ENCODE measurements at regions of chr2 and their contacts with region 1.

Region 1: GRCh38 chr2:197113275-197113711 is 186.8 kb upstream of the PGAP1 start:
- DNase-seq: peak; percentile 37
- H3K4me3 ChIP-seq: no peak overlapping the region
- H3K27ac ChIP-seq: peak overlapping the region in 1 of 2 experiments; percentile 84; a peak in 2 of 4 replicates
- H3K4me1 ChIP-seq: peaks cover 5 to 16% of the 10 kb centered on the region in 2 experiments; a peak in 2 of 4 replicates
- H3K27me3 ChIP-seq: no peaks in the 10 kb centered on the region
- CTCF ChIP-seq: peak; percentile 72
- EP300 ChIP-seq: no peak
- RAD21 ChIP-seq: peak; percentile 79

Region 2: GRCh38 chr2:197028230-197028629 is 85.1 kb before region 1 on chr2:
- CTCF ChIA-PET with region 1: no interaction called
- POLR2A ChIA-PET with region 1: no interaction called
- DNase-seq: no peak
- H3K4me3 ChIP-seq: no peak overlapping the region
- H3K27ac ChIP-seq: no peak overlapping the region
- H3K4me1 ChIP-seq: no peaks in the 10 kb centered on the region; a peak in 1 of 4 replicates
- H3K27me3 ChIP-seq: no peaks in the 10 kb centered on the region
- CTCF ChIP-seq: no peak
- EP300 ChIP-seq: no peak
- RAD21 ChIP-seq: no peak

Region 3: DNA sequence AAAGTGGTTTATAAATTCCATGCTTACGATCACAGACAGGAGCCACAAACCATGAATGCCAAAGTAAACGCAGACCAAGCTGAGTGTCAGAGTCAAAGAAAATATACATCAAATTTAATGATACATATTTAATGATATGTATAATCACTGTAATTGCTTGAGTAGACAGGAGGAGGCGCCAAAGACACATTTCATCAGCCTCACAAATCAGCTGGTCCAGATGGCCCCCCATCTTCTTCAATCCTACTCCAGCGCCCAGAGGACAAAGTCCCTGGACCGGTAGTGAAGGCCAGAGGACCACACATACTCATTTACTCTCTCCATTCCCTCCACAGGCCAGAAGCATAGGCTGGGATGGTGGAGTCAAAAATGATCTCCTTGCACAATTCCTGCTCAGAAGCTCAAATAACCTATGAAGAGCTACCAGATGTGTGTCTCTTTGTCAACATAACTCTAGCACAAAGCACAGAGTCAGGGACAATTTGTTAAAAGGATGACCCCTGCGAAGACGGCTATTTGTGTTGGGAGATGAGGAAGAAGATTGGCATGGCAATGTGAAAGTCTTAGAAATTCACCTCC is 37.4 kb before region 1 on chr2:
- CTCF ChIA-PET with region 1: interaction called, 13 read pairs
- POLR2A ChIA-PET with region 1: no interaction called
- DNase-seq: no peak
- H3K4me3 ChIP-seq: no peak overlapping the region
- H3K27ac ChIP-seq: peak overlapping the region in 1 of 2 experiments; percentile 58; a peak in 2 of 4 replicates
- H3K4me1 ChIP-seq: peaks cover 21 to 26% of the 10 kb centered on the region in 2 experiments; a peak in 3 of 4 replicates
- H3K27me3 ChIP-seq: no peaks in the 10 kb centered on the region
- CTCF ChIP-seq: peak; percentile 49
- EP300 ChIP-seq: no peak
- RAD21 ChIP-seq: peak; percentile 74

Region 4: GRCh38 chr2:197131558-197131855 is 18.2 kb after region 1 on chr2:
- CTCF ChIA-PET with region 1: interaction called, 15 read pairs
- POLR2A ChIA-PET with region 1: interaction called, 3 read pairs
- DNase-seq: no peak
- H3K4me3 ChIP-seq: no peak overlapping the region
- H3K27ac ChIP-seq: no peak overlapping the region
- H3K4me1 ChIP-seq: peaks cover 0 to 6% of the 10 kb centered on the region in 2 experiments; a peak in 1 of 4 replicates
- H3K27me3 ChIP-seq: no peaks in the 10 kb centered on the region
- CTCF ChIP-seq: no peak
- EP300 ChIP-seq: no peak
- RAD21 ChIP-seq: no peak

Region 5: DNA sequence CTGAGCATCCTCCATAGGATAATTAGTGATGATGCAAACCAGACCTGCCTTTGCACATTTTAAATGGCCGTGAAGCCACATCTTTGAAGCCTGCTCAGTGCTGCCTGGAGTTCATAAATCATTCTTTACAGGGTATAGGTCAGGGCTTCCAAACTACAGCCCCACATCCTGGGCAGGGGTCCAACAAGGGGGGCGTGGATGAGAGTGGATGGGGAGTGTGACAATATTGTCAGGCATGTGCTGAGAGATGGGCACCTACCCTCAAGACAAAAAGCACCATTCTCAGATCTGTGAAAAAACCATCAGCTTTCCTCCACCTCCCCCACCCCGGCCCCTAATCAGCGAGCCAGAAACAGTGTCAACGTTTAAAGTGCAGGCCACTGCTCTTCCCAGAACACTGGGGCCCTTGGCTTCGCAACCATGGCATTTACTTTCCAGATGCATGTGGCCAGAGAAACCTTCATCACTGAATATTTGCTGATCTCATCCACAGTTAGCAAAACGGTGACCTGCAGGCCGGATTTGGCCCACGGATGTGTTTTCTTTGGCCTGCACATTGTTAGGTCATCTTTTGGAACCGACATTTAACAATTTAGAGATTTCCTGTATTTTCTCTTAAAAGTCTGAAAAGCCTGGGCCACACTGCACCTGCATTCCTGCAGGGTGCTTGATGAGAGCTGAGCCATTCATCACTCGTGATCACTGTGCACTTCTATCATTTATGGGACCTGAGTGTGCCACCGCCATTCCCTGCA is 66.6 kb after region 1 on chr2:
- CTCF ChIA-PET with region 1: interaction called, 43 read pairs
- POLR2A ChIA-PET with region 1: no interaction called
- DNase-seq: peak; percentile 70
- H3K4me3 ChIP-seq: no peak overlapping the region; a peak in 1 of 4 replicates
- H3K27ac ChIP-seq: peak overlapping the region; percentile 49 to 99
- H3K4me1 ChIP-seq: peaks cover 6 to 41% of the 10 kb centered on the region in 2 experiments; a peak in 3 of 4 replicates
- H3K27me3 ChIP-seq: no peaks in the 10 kb centered on the region
- CTCF ChIP-seq: no peak
- EP300 ChIP-seq: peak; percentile 76 to 91
- RAD21 ChIP-seq: no peak; the same call in 1 of the 2 replicates

Region 6: DNA sequence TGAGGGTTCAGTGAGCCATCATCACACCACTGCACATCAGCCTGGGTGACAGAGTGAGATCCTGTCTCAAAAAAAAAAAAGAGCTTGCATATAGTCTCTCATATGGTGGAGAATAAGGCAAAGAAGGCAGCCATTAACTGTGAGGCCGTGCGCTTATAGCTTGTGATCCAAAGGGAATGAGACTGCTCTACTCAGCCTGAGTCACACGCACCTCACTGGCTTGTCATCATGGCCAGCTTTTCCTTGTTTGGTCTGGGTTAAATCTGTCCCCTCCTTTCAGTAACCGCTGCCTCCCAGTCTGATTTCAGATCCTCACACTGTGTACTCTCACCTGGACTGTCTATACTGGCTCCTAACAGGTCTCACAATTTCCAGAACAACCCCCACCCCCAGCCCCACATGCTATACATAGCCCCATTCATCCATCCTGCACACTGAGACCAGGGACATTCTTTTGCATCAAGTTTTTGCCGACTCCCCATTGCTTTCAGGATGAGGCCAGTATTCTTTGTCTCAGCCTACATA is 232.6 kb after region 1 on chr2:
- CTCF ChIA-PET with region 1: no interaction called
- POLR2A ChIA-PET with region 1: no interaction called
- DNase-seq: no peak
- H3K4me3 ChIP-seq: no peak overlapping the region
- H3K27ac ChIP-seq: no peak overlapping the region
- H3K4me1 ChIP-seq: no peaks in the 10 kb centered on the region
- H3K27me3 ChIP-seq: no peaks in the 10 kb centered on the region
- CTCF ChIP-seq: no peak
- EP300 ChIP-seq: no peak
- RAD21 ChIP-seq: no peak

Region 7: GRCh38 chr2:197369228-197369932 is 256.1 kb after region 1 on chr2:
- CTCF ChIA-PET with region 1: interaction called, 10 read pairs
- POLR2A ChIA-PET with region 1: no interaction called
- DNase-seq: no peak
- H3K4me3 ChIP-seq: no peak overlapping the region
- H3K27ac ChIP-seq: peak overlapping the region in 1 of 2 experiments; percentile 30; a peak in 2 of 4 replicates
- H3K4me1 ChIP-seq: peaks cover 0 to 2% of the 10 kb centered on the region in 2 experiments; a peak in 1 of 4 replicates
- H3K27me3 ChIP-seq: no peaks in the 10 kb centered on the region
- CTCF ChIP-seq: no peak
- EP300 ChIP-seq: no peak
- RAD21 ChIP-seq: no peak